CD8-positive, alpha-beta T cell (primary cell): ENCODE measurements at regions of chr17 and their contacts with region 1.

Region 1: DNA sequence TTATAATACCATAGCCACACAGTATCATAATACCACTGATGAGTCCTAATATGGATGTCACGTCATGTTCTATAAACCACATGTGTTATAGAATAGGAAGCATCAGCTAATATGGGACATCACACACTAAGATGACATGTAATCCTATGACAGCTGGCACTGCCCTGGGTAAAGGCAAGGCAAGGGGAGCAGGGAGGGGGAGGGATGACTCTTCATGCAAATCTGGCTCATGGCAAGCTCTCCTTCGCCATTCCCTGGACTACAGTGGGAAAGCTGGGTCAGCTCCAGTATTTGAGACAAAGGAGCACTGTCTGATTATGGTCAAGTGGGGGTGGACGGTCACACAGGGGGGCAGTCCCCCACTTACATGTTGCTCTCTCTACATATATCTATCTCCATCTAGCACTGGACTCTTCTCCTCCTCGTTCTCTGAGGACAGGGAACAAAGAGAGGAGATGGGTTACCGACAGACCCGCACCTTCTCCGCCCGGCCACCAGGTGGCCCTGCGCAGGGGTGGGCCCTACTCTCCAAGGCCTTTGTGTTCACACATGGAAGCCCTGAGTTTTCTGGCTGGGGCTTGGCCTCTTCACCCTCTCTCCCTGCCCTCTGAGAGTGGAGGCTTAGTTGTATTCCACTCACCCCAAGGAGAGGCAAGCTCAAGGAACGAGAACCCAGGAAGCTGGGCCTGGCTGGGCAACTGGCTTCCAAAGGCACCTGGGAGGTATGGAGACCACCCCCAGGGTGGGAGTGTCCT is 23.4 kb upstream of the MPO start:
- DNase-seq: peak; percentile 35 to 73 (median 57)
- ATAC-seq: peak; percentile 97
- H3K4me3 ChIP-seq: no peak overlapping the region
- H3K4me3 Mint-ChIP-seq: no peak overlapping the region
- H3K27ac ChIP-seq: no peak overlapping the region
- H3K27ac Mint-ChIP-seq: no peak overlapping the region
- H3K4me1 ChIP-seq: peaks cover 6% of the 10 kb centered on the region
- H3K4me1 Mint-ChIP-seq: peaks cover 6% of the 10 kb centered on the region
- H3K27me3 ChIP-seq: no peaks in the 10 kb centered on the region
- H3K27me3 Mint-ChIP-seq: no peaks in the 10 kb centered on the region
- CTCF ChIP-seq: peak; percentile 74

Region 2: DNA sequence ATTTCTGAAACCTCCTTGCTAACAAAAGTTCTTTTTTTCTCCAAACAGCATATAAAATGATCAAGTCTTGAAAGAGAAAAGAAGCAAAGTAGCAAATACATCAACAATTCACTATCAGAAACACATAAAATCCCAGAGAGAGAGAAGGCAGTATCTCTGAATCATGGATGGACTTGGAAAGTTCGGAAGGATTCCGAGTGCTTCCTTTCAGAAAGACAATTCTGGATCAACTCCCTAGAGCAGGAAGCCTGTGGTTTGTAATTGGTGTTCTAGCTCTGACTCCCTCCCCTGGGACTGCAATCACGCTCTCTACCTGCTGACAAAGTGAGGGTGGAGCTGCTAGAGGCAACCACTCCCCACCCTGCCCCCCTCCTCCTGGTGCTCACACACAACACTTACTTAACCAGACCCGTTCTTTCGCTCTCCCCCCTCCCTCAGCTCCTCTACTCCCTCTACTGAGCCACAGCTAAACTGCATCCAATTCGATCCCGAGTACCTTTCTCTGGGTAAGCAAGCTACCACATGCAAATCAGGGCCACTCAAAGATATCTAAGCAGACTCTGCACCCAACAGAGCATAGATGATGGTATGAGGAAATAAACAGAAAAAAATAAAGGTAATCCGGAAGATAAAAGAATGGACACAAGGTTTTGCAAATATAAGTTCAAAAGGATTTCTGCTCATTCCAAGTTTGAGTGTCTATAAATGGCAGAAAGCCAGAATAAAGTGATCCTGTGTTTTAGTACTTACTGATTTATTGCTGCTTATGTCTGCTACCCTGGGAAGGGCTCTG is 113.3 kb after region 1 on chr17 and contains the start of gene RNF43:
- CTCF ChIA-PET with region 1: interaction called, 6 read pairs
- POLR2A ChIA-PET with region 1: no interaction called
- intact Hi-C with region 1: loop called in 1 of 2 experiments (anchors 5 kb)
- DNase-seq: peak; percentile 70 to 96 (median 87)
- ATAC-seq: peak; percentile 100
- H3K4me3 ChIP-seq: no peak within 1 kb of the TSS
- H3K4me3 Mint-ChIP-seq: no peak within 1 kb of the TSS
- H3K27ac ChIP-seq: peak within 1 kb of the TSS in 1 of 2 experiments; percentile 47
- H3K27ac Mint-ChIP-seq: peak within 1 kb of the TSS; percentile 3
- H3K4me1 ChIP-seq: peaks cover 15% of the 10 kb centered on the region
- H3K4me1 Mint-ChIP-seq: peaks cover 17% of the 10 kb centered on the region
- H3K27me3 ChIP-seq: no peaks in the 10 kb centered on the region
- H3K27me3 Mint-ChIP-seq: no peaks in the 10 kb centered on the region
- CTCF ChIP-seq: peak; percentile 75
- total RNA-seq, gene RNF43: 0.61 to 1.0 TPM

Region 3: DNA sequence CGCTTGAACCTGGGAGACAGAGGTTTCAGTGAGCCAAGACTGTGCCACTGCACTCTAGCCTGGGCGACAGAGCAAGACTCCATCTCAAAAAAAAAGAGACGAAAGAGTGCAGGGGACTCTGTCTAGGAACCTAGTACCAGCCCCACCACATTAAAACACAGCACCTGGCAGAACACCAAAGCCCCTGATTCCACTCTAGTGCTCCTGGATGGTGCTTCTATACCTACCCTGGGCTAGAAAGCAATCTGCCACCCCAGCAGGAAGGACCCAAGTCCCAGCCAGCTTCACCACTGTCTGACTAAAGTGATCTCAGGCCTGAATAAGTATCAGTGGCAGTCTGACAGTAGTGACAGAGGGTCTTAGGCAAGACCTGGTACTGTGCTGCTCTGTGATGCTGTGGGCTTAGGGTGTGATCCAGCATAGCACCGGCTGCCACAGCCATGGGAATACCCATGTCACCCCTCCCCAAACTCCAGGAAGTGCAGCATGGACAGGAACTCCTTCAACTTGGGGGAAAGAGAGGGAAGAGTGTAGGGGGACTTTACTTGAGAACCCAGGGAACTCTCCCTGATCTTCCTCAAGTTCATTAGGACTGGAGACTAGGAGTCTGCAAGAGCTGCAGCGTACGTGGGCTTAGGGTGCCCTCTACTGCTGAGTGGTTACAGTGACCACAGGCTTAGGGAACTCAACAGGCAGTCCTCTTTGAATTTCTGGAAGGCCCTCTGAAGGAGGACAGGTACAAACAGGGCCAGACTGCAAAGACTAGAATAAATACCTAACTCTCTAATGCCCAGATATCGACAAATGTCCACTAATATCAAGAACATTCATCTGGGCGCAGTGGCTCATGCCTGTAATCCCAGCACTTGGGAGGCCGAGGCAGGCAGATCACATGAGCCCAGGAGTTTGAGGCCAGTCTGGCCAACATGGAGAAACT is 143.2 kb after region 1 on chr17:
- CTCF ChIA-PET with region 1: interaction called, 6 read pairs
- POLR2A ChIA-PET with region 1: interaction called, 4 read pairs
- intact Hi-C with region 1: loop called in 1 of 2 experiments (anchors 1 kb)
- DNase-seq: peak; percentile 20 to 79 (median 58)
- ATAC-seq: no peak
- H3K4me3 ChIP-seq: no peak overlapping the region
- H3K4me3 Mint-ChIP-seq: no peak overlapping the region
- H3K27ac ChIP-seq: no peak overlapping the region
- H3K27ac Mint-ChIP-seq: no peak overlapping the region
- H3K4me1 ChIP-seq: no peaks in the 10 kb centered on the region
- H3K4me1 Mint-ChIP-seq: peaks cover 3% of the 10 kb centered on the region
- H3K27me3 ChIP-seq: no peaks in the 10 kb centered on the region
- H3K27me3 Mint-ChIP-seq: no peaks in the 10 kb centered on the region
- CTCF ChIP-seq: peak; percentile 60

Region 4: GRCh38 chr17:59004338-59005111 is 700.4 kb after region 1 on chr17:
- CTCF ChIA-PET with region 1: no interaction called
- POLR2A ChIA-PET with region 1: no interaction called
- intact Hi-C with region 1: loop called in 1 of 2 experiments (anchors 5 kb)
- DNase-seq: peak; percentile 52 to 82 (median 74)
- ATAC-seq: peak; percentile 54
- H3K4me3 ChIP-seq: no peak overlapping the region
- H3K4me3 Mint-ChIP-seq: no peak overlapping the region
- H3K27ac ChIP-seq: peak overlapping the region in 1 of 2 experiments; percentile 40
- H3K27ac Mint-ChIP-seq: peak overlapping the region; percentile 60
- H3K4me1 ChIP-seq: peaks cover 15% of the 10 kb centered on the region
- H3K4me1 Mint-ChIP-seq: peaks cover 13% of the 10 kb centered on the region
- H3K27me3 ChIP-seq: no peaks in the 10 kb centered on the region
- H3K27me3 Mint-ChIP-seq: no peaks in the 10 kb centered on the region
- CTCF ChIP-seq: peak; percentile 98